ENCODE measurements at regions of chr2 and their contacts with region 1.

Region 1: DNA sequence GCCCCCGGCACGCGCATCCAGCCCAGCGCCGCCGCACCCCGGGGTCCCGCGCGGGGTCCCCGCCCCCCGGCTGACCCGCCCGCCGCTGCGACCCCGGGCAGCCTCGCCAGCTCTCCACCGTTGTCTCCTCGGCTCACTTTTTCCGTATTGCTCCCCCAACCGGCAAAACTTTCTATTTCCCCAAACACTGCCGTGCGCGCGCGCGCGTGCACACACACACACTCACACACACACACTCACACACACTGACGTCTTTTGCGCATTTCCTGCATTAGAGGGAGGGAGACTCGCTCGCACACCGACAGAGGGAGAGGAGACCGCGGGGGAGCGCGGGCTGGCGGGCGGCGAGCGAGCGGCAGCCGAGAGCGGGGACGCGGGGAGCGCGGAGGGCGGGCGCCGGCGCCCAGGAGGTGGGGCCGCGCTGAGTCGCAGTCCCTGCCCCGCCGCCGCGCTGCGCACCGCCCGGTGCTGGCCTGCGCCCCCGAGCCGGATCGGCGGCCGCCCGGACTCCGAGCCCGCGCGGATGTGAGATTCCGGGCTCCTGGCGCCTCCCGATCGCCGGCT is 542 bp upstream of the PRKCE start:
- DNase-seq: peak; percentile 92
- H3K4me3 ChIP-seq: peak overlapping the region; percentile 80
- CTCF ChIP-seq: peak; percentile 56

Region 2: DNA sequence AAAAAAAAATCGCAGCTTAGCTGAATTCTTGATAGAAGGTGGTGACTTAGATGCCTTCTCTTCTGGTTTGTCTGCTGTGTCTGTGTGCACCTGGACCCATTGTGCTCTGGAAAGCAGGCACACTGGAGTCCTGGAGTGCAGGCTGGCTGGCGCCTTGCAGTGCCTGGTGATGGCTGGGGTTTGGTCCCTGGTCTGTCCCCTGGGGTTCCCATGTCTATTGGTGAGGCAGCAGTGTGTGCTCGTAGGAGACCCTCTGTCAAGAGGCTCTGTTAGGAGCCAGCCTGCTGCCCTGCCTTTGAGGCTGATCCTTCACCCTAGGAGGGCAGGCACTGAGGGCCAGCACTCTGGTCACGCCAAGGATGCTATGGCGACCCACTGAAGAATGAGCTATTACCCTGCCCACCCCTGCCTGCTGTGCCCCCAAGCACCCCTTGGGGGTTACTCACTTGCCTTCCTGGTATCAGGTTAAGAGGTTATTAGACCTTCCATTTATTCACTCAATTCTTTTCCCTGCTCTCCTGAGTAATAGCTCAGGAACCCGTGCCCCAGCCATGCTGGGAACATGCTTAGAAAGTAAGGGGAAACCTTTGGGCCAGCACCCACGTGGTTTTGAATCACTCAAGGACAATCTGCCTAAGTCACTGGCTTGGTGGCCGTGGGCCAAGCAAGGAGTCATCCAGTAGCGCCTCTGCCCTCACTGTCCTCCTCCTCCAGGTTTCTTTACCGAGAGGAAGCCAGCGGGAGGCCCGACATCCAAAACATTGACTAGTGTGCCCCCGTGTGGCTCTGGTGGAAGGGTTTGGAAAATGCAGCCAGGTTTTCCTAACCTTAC is 285.1 kb after region 1 on chr2:
- CTCF ChIA-PET with region 1: interaction called, 72 read pairs
- POLR2A ChIA-PET with region 1: interaction called, 7 read pairs
- DNase-seq: peak; percentile 91
- H3K4me3 ChIP-seq: no peak overlapping the region
- CTCF ChIP-seq: peak; percentile 81

Region 3: DNA sequence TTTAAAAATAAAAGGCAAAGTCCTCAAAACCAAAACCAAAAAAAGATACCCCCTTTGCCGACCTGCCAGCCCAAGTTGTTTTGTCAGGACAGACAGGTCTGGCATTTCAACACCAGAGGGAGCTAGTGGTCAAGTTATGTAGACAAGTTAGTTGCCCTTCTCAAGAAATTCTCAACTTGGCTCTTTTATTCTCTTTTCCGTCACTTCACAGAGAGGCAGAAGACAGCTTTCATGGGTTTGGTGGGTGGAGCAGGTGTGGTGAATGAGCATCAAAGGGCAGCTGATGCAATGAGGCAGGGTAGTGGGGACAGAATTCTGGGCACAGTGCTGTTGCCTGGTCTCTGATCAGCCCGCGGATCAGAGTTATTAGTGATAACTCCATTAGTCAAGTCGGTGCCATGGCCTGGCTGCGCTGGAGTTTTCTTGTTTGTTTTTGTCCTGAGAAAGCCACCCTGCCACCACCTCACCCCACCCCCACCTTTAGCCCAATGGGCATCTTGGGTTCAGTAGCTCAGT is 342.6 kb after region 1 on chr2:
- CTCF ChIA-PET with region 1: interaction called, 14 read pairs
- POLR2A ChIA-PET with region 1: interaction called, 3 read pairs
- DNase-seq: no peak
- H3K4me3 ChIP-seq: no peak overlapping the region
- CTCF ChIP-seq: peak; percentile 70